OCI-LY7 (cell line): ENCODE measurements at regions of chr7 and their contacts with region 1.

Region 1: GRCh38 chr7:64853679-64854078 is 49.4 kb upstream of the ZNF273 start:
- DNase-seq: no peak
- H3K4me3 ChIP-seq: no peak overlapping the region
- H3K27ac ChIP-seq: no peak overlapping the region
- H3K4me1 ChIP-seq: peaks cover 3% of the 10 kb centered on the region
- CTCF ChIP-seq: no peak

Region 2: DNA sequence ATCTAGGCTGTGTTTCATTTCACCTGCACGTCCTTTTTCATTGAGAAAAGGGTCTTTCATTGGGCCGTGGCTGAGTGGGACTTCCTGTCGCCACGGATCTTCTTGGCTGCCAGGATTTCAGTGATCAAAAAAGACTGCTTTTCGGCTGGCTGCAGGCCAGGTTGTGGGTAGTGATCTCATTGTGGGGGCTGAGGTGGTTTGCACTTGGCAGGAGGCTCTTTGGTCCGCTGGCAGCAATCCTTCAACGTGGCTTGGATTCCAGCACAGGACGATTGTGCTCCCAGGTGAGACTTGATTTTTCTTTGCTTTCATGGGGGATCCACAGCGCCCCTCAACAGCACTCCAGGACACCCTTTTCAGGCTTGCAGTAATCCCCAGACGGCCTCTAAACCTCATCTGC is 20.4 kb after region 1 on chr7:
- CTCF ChIA-PET with region 1: no interaction called
- POLR2A ChIA-PET with region 1: no interaction called
- intact Hi-C with region 1: loop called (anchors 2 kb)
- DNase-seq: no peak
- H3K4me3 ChIP-seq: no peak overlapping the region
- H3K27ac ChIP-seq: no peak overlapping the region
- H3K4me1 ChIP-seq: no peaks in the 10 kb centered on the region
- CTCF ChIP-seq: no peak